Breast epithelium (tissue), 4 donors: ENCODE measurements at regions of chr18 and their contacts with region 1.

Region 1: GRCh38 chr18:40017021-40017420 is 1938.0 kb upstream of the PIK3C3 start:
- DNase-seq: no peak
- H3K4me3 ChIP-seq: no peak overlapping the region
- H3K27ac ChIP-seq: no peak overlapping the region
- H3K4me1 ChIP-seq: no peaks in the 10 kb centered on the region
- H3K27me3 ChIP-seq: no peaks in the 10 kb centered on the region
- CTCF ChIP-seq: no peak
- POLR2A ChIP-seq: no peak

Region 2: GRCh38 chr18:39942702-39943101 is 74.3 kb before region 1 on chr18:
- intact Hi-C with region 1: loop called (anchors 2 kb)
- DNase-seq: no peak
- H3K4me3 ChIP-seq: no peak overlapping the region
- H3K27ac ChIP-seq: no peak overlapping the region
- H3K4me1 ChIP-seq: no peaks in the 10 kb centered on the region
- H3K27me3 ChIP-seq: no peaks in the 10 kb centered on the region
- CTCF ChIP-seq: no peak
- POLR2A ChIP-seq: no peak